Right ventricle myocardium inferior (tissue), 1 donor: ENCODE measurements at regions of chr14 and their contacts with region 1.

Region 1: GRCh38 chr14:59189786-59190771 is 1.6 kb downstream of the DAAM1 start:
- DNase-seq: peak; percentile 93
- ATAC-seq: peak; percentile 45

Region 2: GRCh38 chr14:59132796-59133494 is 57.1 kb before region 1 on chr14:
- intact Hi-C with region 1: loop called (anchors 5 kb)
- DNase-seq: no peak
- ATAC-seq: no peak

Region 3: GRCh38 chr14:59316151-59316830 is 126.2 kb after region 1 on chr14:
- intact Hi-C with region 1: loop called (anchors 2 kb)
- DNase-seq: no peak
- ATAC-seq: no peak

Region 4: DNA sequence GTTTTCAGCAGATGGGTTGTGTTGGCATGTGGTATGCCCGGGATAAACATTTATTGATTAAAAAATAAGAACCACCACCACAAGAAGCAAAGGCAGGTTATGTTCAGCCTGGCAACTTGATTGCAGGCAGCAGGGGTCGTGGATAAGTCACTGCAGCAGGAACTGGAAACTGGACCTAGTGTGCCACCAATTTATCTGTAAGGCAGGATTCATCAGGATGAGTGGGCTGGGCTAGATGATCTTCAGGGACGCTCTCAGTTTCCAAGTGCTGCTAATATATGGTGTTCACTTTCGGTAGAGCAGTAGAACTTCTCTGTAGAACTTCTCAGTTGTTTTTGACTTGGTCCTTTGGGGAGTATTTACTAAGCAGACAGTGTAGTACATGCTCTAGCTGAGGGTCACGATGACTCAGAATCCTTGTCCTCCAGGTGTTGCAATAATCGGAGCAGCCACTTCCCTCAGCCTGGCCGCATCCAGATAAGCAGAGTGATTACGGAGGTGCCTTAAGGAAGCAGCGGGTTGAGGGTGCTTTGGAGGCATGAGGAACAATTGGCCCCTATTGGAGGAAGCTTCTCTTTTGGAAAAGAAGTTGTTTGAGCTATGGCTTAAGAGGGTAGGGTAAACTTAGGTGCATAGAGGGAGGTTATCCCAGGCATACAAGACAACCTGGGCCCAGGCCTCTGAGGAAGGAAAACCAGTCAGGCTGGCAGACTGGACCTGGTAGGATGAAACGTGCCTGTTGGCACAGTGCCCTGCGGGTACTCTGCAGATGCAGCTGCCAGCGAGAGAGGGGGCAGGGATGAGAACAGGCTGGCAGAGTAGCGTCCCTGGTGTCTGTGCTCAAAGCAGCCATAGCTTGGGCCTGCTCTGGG is 171.1 kb after region 1 on chr14:
- intact Hi-C with region 1: loop called (anchors 2 kb)
- DNase-seq: peak; percentile 80
- ATAC-seq: peak; percentile 64

Region 5: GRCh38 chr14:59438195-59438647 is 248.1 kb after region 1 on chr14:
- intact Hi-C with region 1: loop called (anchors 2 kb)
- DNase-seq: no peak
- ATAC-seq: no peak